ENCODE measurements at regions of chr19 and their contacts with region 1.

Region 1: GRCh38 chr19:46513461-46514236 is 18.0 kb upstream of the PNMA8B start:
- DNase-seq: peak; percentile 86
- H3K4me3 Mint-ChIP-seq: no peak overlapping the region
- H3K27ac Mint-ChIP-seq: no peak overlapping the region
- H3K4me1 Mint-ChIP-seq: peaks cover 24% of the 10 kb centered on the region
- H3K27me3 Mint-ChIP-seq: peaks cover 44% of the 10 kb centered on the region

Region 2: DNA sequence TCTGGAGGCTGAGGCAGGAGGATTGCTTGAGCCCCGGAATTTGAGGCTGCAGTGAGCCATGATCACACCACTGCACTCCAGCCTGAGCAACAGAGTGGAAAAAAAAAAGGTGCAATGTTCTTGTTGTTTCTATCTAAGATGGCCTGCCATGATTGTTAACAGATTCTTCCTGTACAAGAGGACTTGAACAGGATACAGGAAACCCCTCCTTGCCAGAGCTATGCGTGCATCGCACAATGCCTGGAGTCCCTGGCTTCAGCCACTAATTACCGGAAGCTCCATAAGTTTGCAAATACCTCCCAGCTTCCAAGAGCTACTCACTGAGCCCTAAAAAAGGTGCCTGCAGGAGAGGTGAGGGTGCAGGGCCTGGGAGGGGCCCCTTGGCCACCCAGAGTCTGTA is 229.9 kb before region 1 on chr19:
- CTCF ChIA-PET with region 1: interaction called, 11 read pairs
- DNase-seq: no peak
- H3K4me3 Mint-ChIP-seq: no peak overlapping the region
- H3K27ac Mint-ChIP-seq: no peak overlapping the region
- H3K4me1 Mint-ChIP-seq: no peaks in the 10 kb centered on the region
- H3K27me3 Mint-ChIP-seq: peaks cover 7% of the 10 kb centered on the region

Region 3: DNA sequence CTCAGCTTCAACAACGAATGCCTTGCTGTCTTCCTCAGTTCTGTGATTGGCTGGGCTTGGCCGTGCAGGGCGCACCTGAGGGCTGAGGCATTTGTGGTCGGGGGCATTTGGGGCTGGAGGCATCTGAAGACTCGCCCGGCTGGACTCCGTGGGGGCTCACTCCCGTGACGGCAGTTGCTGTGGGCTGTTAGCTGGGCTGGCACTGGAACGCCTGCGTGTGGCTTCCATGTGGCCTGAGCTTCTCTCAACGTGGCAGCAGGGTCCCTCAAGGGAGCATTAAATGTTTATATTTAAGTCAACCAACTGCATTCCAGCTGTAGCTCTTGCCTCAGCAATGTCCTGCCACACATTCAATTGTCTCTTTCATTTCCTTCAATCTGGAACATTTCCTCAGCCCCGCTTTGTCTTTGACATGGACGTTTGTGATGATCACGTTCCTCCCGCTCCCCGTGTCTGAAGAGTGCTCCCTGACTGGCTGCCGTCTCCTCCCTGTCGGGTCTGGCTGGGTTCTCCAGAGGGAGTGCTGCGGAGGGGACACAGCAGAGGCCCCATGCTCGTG is 121.3 kb before region 1 on chr19:
- CTCF ChIA-PET with region 1: interaction called, 14 read pairs
- DNase-seq: no peak
- H3K4me3 Mint-ChIP-seq: no peak overlapping the region
- H3K27ac Mint-ChIP-seq: no peak overlapping the region
- H3K4me1 Mint-ChIP-seq: no peaks in the 10 kb centered on the region
- H3K27me3 Mint-ChIP-seq: no peaks in the 10 kb centered on the region

Region 4: GRCh38 chr19:46529622-46530462 is 16.2 kb after region 1 on chr19:
- CTCF ChIA-PET with region 1: interaction called, 45 read pairs
- DNase-seq: peak; percentile 83
- H3K4me3 Mint-ChIP-seq: no peak overlapping the region
- H3K27ac Mint-ChIP-seq: peak overlapping the region; percentile 31
- H3K4me1 Mint-ChIP-seq: peaks cover 22% of the 10 kb centered on the region
- H3K27me3 Mint-ChIP-seq: peaks cover 38% of the 10 kb centered on the region

Region 5: DNA sequence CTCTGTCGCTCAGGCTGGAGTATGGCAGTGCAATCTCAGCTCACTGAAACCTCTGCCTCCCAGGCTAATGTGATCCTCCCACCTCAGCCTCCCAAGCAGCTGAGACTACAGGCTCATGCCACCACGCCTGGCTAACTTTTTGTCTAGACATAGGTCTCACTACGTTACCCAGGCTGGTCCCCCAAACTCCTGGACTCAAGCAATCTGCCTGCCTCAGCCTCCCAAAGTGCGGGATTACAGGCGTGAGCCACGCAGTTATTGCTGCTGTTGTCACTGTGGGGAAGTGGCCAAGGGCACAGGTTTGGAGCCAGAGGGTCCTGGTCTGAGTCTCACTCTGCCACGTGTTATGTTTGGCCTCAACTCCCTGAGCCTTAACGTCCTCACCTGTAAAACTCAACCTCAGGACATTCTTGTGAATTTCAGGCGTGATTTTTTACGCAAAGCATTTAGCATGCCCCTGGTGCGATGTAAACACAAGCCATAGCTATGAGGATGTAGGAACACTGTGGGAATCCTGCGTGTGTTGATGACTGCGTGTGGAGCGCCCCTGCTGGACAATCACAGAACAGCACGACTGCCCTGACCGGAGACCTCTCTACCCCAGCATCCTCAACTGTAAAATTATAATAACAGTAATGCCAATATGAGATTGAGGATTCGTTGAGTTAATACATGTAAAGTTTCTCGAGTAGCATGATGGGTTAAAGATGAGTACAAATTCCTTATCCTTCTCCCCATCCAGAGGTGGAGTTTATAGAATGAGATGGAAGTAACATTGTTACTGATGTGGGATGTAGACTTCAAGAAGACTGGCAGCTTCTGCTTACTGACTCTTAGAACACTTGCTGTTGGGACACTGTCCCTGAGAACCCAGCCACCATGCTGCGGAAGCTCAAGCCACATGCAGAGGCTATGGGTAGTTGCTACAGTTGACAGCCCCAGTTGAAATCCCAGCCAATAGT is 23.8 kb after region 1 on chr19:
- CTCF ChIA-PET with region 1: interaction called, 66 read pairs
- DNase-seq: peak; percentile 74
- H3K4me3 Mint-ChIP-seq: no peak overlapping the region
- H3K27ac Mint-ChIP-seq: no peak overlapping the region
- H3K4me1 Mint-ChIP-seq: peaks cover 2% of the 10 kb centered on the region
- H3K27me3 Mint-ChIP-seq: peaks cover 54% of the 10 kb centered on the region

Region 6: DNA sequence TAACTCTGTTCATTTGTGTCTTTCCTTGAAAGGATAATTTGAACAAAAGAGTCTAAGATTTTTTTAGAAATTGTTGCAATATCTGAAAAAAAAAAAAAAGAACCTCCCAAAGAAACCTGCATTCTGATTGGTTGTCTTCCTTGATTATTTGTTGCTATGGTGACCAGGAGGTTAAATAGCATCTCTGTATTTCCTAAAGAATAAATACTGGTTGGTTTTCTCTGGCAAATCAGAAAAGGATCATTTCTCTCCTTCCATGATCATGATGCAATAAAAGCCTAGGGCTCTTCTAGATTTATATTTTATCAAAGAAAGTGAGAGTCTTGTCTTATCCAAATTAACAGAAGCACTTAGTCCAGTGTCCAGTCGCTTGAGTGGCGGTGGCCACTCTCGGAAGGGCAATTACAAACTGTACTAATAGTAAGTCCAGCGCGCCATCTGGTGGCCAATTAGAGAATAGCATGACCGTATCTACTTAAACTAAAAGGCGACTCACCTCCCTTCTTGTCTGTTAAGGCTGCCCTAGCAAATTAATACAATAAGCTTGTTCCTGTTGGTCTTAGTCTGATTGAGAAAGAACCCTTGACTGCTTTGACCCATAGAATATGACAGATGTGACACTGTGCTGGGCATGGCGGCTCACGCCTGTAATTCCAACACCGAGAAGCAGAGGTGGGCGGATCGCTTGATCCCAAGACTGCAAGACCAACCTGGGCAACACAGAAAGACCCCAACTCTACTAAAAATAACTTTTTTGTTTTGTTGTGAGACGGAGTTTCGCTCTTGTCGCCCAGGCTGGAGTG is 29.0 kb after region 1 on chr19:
- CTCF ChIA-PET with region 1: interaction called, 66 read pairs
- DNase-seq: peak; percentile 87
- H3K4me3 Mint-ChIP-seq: no peak overlapping the region
- H3K27ac Mint-ChIP-seq: no peak overlapping the region
- H3K4me1 Mint-ChIP-seq: peaks cover 11% of the 10 kb centered on the region
- H3K27me3 Mint-ChIP-seq: peaks cover 29% of the 10 kb centered on the region

Region 7: DNA sequence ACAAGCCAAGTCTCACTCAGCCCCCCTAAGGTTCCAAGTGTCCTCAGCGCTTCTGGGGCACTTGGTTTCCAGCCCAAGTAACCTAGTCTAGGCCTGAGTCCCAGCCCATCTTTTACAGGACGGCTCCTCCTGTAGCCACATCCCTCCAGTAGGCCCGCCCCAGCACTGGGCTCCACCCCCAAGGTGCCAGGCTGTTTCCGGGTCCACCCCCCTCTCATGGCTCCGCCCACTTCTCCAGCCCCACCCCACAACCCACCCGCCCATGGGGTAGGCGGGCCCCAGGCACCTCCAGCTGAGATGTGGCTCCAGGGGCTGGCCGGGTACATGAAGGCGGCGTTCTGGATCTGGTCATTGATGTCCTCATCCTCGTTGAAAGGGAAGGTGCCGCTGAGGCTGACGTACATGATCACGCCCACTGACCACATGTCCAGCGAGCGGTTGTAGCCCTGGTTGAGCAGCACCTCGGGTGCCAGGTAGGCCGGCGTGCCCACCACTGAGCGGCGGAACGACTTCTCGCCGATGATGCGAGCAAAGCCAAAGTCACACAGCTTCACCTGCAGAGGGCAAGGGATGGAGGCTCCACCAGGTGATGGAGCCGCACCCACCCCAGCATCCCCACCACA is 164.6 kb after region 1 on chr19:
- CTCF ChIA-PET with region 1: no interaction called
- DNase-seq: peak; percentile 74
- H3K4me3 Mint-ChIP-seq: no peak overlapping the region
- H3K27ac Mint-ChIP-seq: no peak overlapping the region
- H3K4me1 Mint-ChIP-seq: peaks cover 11% of the 10 kb centered on the region
- H3K27me3 Mint-ChIP-seq: no peaks in the 10 kb centered on the region

Measured in activated naive CD4-positive, alpha-beta T cell treated with anti-CD3 and anti-CD28 coated beads, Interleukin-2, amount 10 ng/mL, durations not matched to agents 7 days and 5 days (primary cell).